Activated CD4-positive, alpha-beta T cell treated with anti-CD3 and anti-CD28 coated beads for 36 hours (primary cell): ENCODE measurements at regions of chr11 and their contacts with region 1.

Region 1: GRCh38 chr11:128201801-128202200 is 385.6 kb downstream of the ETS1 start:
- DNase-seq: no peak
- ATAC-seq: no peak
- H3K4me3 Mint-ChIP-seq: no peak overlapping the region
- H3K27ac Mint-ChIP-seq: no peak overlapping the region
- H3K4me1 Mint-ChIP-seq: peaks cover 23% of the 10 kb centered on the region
- H3K27me3 Mint-ChIP-seq: no peaks in the 10 kb centered on the region

Region 2: GRCh38 chr11:128226106-128226716 is 24.4 kb after region 1 on chr11:
- CTCF ChIA-PET with region 1: interaction called, 3 read pairs
- POLR2A ChIA-PET with region 1: no interaction called
- intact Hi-C with region 1: loop called in 1 of 2 experiments (anchors 2 kb)
- DNase-seq: peak; percentile 62
- ATAC-seq: peak; percentile 54
- H3K4me3 Mint-ChIP-seq: no peak overlapping the region
- H3K27ac Mint-ChIP-seq: peak overlapping the region; percentile 55
- H3K4me1 Mint-ChIP-seq: peaks cover 52% of the 10 kb centered on the region
- H3K27me3 Mint-ChIP-seq: no peaks in the 10 kb centered on the region

Region 3: GRCh38 chr11:128232588-128232987 is 30.8 kb after region 1 on chr11:
- CTCF ChIA-PET with region 1: no interaction called
- POLR2A ChIA-PET with region 1: no interaction called
- intact Hi-C with region 1: loop called (anchors 2 kb)
- DNase-seq: peak; percentile 81
- ATAC-seq: peak; percentile 63
- H3K4me3 Mint-ChIP-seq: no peak overlapping the region
- H3K27ac Mint-ChIP-seq: peak overlapping the region; percentile 92
- H3K4me1 Mint-ChIP-seq: peaks cover 60% of the 10 kb centered on the region
- H3K27me3 Mint-ChIP-seq: no peaks in the 10 kb centered on the region